Heart right ventricle (tissue), 16 donors: ENCODE measurements at regions of chr5 and their contacts with region 1.

Region 1: DNA sequence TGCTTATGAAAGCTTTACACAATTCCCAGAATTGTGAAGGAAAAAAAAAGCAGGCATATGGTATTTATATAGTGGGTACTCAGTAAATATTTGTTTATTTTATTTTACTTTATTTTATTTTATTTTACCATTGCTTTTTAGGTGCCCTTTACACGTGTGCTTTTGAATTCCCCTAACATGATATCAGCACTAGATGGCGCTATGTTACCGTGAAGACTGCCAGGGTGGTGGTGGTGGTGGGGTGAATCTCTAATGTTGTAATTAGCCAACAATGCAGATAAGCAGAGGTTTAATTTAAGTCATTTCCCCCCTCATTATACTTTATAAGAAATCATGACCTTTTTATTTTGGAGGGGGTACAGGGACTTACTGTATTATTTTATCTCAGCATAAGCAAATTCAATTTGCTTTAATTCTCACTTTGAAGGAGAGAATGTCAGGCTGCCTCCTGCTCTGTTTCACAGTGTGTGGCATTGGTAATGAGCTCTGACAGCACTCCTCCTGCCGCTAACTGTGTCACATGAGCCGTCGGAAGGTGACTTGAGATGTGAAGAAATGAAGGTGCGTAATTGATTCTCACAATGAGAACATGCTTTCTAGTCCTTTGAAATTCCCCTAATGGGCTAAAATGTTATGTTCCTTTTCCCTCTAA is 165.6 kb downstream of the YTHDC2 start:
- DNase-seq: no peak
- ATAC-seq: peak in 7 of 8 donors; percentile 53 to 84 (median 69)
- H3K4me3 ChIP-seq: no peak overlapping the region
- H3K27ac ChIP-seq: no peak overlapping the region
- H3K4me1 ChIP-seq: no peaks in the 10 kb centered on the region
- H3K27me3 ChIP-seq: no peaks in the 10 kb centered on the region
- CTCF ChIP-seq: peak; percentile 55 to 80 (median 71)

Region 2: DNA sequence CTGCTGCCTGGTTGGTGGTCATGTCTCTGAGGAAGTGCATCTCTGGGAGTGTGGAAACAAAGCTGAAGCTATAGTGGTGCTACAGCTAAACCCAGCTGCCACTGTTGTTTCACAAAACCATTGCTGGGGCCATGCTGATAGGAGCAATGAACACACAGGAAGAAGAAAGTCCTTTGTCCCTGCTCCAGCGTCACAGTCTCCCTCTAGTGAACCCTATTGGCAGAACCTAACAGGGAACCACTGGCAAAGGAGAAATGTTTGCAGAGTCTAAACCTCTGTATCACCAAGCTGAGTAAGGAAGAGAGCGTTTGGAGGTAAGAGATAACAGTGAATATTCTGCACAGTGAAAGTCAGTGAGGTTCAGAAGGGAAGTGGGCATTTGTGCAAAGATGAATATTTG is 78.5 kb after region 1 on chr5:
- intact Hi-C with region 1: no loop called
- DNase-seq: no peak
- ATAC-seq: no peak
- H3K4me3 ChIP-seq: no peak overlapping the region
- H3K27ac ChIP-seq: no peak overlapping the region
- H3K4me1 ChIP-seq: no peaks in the 10 kb centered on the region
- H3K27me3 ChIP-seq: peaks cover 0 to 10% (median 0%) of the 10 kb centered on the region in 7 donors
- CTCF ChIP-seq: no peak

Region 3: GRCh38 chr5:114789773-114790402 is 1110.8 kb after region 1 on chr5:
- intact Hi-C with region 1: loop called in 3 of 10 experiments (anchors 5 to 10 kb)
- DNase-seq: no peak
- ATAC-seq: no peak
- H3K4me3 ChIP-seq: no peak overlapping the region
- H3K27ac ChIP-seq: no peak overlapping the region
- H3K4me1 ChIP-seq: no peaks in the 10 kb centered on the region
- H3K27me3 ChIP-seq: peaks cover 0 to 19% (median 5%) of the 10 kb centered on the region in 7 donors
- CTCF ChIP-seq: peak in 7 of 9 donors; percentile 27 to 58 (median 47)

Region 4: DNA sequence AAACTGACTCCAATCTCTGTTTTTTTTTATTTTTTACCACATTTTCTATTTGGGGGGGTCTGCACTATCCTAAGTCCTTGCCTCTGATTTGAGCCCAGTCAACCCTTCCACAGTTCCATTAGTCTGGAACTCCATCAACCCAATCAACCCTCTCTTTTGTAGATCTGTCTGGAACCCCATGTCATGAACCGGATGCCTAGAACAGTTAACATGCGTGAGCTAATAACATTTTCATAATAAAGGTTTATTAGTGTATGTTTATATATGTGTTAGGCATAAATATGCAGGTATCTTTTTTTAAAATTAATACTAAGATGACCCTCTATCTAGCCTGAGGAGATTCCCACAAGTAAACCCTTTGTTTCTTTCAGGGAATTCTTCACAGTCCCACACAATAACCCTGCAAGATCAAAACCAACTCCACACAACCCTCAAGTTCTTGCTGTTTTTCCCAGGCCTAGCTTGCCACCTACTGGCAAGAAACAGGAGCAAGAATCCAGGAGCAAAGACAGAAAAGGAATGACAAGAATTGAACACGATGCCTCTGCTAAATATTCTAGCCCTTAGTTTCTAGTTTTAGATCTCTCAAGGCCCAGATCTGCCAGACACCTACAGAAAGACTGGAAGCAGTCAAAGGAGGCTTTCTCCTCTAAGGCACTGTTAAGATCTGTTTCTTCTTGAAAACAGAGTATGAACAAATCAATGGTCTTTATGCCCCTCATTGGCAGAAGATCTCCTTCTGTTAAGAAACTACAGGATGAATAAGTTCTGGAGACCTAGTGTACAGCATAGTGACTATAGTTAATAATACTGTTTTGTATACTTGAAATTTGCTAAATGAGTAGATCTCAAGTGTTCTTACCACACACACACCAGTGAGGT is 1390.3 kb after region 1 on chr5:
- intact Hi-C with region 1: loop called in 2 of 10 experiments (anchors 2 to 10 kb)
- DNase-seq: peak in 1 of 2 donors; percentile 26
- ATAC-seq: peak in 2 of 8 donors; percentile 33 to 44
- H3K4me3 ChIP-seq: no peak overlapping the region
- H3K27ac ChIP-seq: no peak overlapping the region
- H3K4me1 ChIP-seq: no peaks in the 10 kb centered on the region
- H3K27me3 ChIP-seq: peaks cover 0 to 25% (median 15%) of the 10 kb centered on the region in 7 donors
- CTCF ChIP-seq: peak; percentile 14 to 69 (median 58)